Activated naive CD4-positive, alpha-beta T cell treated with anti-CD3 and anti-CD28 coated beads for 36 hours (primary cell): ENCODE measurements at regions of chr10 and their contacts with region 1.

Region 1: DNA sequence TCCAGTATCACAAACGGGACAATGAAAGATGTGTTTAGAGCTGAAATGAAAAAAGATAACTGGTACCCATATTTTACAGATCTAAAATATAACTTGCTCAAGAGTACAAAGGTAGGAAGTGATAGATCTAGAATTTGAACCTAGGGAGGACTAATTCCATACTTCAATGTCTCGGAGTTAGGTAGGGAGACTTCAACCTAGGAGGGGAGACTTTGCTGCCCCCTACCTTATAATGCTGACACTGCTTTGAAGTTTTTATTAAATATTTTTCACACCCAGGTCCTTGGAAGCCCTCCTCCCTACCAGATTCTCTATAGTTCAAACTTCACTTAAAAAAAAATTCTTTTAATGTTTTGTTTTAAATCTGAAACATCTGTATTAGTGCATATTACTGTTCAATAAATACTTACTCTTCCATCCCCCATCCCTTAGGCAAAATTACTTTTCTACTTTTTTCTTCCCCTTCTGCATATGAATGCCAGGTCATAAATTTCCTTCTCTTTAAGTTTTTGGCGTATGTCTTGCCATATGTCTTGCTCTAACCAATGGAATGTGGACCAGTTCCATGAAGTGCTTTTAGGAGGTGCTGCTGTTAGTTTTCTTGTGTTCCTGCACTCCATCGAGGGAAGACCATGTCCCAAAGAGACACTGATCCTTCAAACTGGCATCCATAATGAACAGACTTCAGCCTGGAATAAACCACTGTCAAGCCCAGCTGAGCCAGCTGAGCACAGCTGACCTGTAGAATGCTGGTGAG is 57.8 kb downstream of the MICU1 start:
- DNase-seq: no peak
- H3K4me3 Mint-ChIP-seq: no peak overlapping the region
- H3K27ac Mint-ChIP-seq: no peak overlapping the region
- H3K4me1 Mint-ChIP-seq: peaks cover 21% of the 10 kb centered on the region
- H3K27me3 Mint-ChIP-seq: no peaks in the 10 kb centered on the region

Region 2: DNA sequence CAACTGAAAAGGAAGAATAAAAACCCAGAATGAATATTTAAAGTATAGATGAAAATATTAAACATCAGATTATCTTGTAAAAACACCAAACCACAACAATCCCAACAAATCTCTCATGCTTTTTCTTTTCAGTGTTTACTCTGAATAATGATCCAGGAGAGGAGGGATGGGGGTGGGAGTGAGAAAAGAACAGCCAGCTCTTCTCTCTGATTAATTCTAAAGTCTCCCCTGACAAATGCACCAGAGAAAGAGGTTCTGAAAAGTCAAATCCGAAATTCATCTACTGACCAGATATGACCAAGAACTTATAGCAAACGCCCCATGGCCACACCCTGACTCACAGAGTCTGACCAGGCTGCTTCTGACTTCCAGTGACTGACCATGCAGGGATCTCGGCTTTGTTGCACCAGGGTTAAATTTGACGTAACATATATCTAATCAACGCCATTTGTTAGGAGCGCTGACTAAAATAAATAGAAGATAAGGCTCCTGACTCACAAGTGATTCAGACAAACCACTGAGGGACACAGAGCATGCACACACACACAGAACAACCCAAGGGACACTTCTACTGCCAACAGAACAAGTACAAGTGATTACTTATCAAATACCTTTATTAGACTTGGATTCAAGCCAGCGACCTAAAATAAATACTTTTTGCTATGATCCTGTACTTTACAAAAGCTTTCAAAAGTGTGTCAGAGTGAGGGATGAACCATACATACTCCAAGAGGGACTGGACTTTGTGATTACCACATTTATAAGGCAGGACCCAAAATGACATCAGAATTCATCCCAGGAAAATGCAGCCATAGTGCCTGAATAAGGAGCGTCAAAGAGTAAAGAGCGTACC is 470.4 kb before region 1 on chr10:
- CTCF ChIA-PET with region 1: no interaction called
- intact Hi-C with region 1: loop called (anchors 2 kb)
- DNase-seq: no peak
- H3K4me3 Mint-ChIP-seq: no peak overlapping the region
- H3K27ac Mint-ChIP-seq: no peak overlapping the region
- H3K4me1 Mint-ChIP-seq: peaks cover 68% of the 10 kb centered on the region
- H3K27me3 Mint-ChIP-seq: no peaks in the 10 kb centered on the region

Region 3: DNA sequence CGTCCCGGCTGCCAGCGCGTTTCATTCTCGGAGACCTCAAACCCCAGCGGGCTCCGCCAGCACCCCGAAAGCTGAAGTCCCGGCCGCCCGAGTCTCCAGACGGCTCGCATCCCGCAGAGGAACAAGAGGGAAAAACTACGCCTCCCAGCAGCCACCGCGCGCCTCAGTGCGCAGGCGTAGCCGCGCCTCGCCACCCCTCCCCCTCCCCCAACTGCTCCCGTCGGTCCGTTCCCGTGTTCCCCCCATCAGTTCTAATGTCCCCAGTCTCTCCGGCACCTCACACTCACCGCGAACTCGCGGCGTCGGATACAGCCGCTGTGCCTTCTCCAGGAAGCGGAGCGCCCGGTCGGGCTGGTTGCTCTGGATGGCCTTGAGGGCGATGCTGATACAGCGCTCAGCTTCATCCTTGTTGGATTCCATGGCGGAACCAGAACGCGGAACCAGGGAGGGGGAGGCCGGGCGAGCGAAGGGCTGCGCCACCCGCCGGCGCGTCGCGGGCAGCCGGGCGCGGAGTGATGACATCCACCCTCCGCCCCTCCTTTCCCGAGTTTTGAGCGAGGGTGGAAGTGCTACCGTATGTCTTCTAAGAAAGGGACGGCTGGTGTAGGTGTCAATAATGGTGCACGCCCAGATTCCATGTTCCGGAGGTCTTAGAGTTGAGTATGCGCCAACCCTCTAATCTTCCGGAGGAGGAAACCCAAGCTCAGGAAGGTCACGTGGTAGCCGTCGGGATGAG is 213.4 kb before region 1 on chr10 and contains the start of gene DNAJB12:
- CTCF ChIA-PET with region 1: no interaction called
- intact Hi-C with region 1: no loop called
- DNase-seq: peak; percentile 91
- H3K4me3 Mint-ChIP-seq: peak within 1 kb of the TSS; percentile 96
- H3K27ac Mint-ChIP-seq: peak within 1 kb of the TSS; percentile 97
- H3K4me1 Mint-ChIP-seq: peaks cover 34% of the 10 kb centered on the region
- H3K27me3 Mint-ChIP-seq: no peaks in the 10 kb centered on the region
- total RNA-seq, gene DNAJB12: 13.7 to 14.1 TPM

Region 4: GRCh38 chr10:72616716-72617115 is 48.7 kb after region 1 on chr10:
- CTCF ChIA-PET with region 1: no interaction called
- intact Hi-C with region 1: loop called (anchors 2 kb)
- DNase-seq: no peak
- H3K4me3 Mint-ChIP-seq: no peak overlapping the region
- H3K27ac Mint-ChIP-seq: peak overlapping the region; percentile 68
- H3K4me1 Mint-ChIP-seq: peaks cover 20% of the 10 kb centered on the region
- H3K27me3 Mint-ChIP-seq: no peaks in the 10 kb centered on the region

Region 5: GRCh38 chr10:72625608-72626443 is 57.8 kb after region 1 on chr10 and contains the start of gene MICU1:
- CTCF ChIA-PET with region 1: no interaction called
- intact Hi-C with region 1: loop called (anchors 1 kb)
- DNase-seq: peak; percentile 98
- H3K4me3 Mint-ChIP-seq: peak within 1 kb of the TSS; percentile 97
- H3K27ac Mint-ChIP-seq: peak within 1 kb of the TSS; percentile 73
- H3K4me1 Mint-ChIP-seq: peaks cover 16% of the 10 kb centered on the region
- H3K27me3 Mint-ChIP-seq: no peaks in the 10 kb centered on the region
- total RNA-seq, gene MICU1: 40.0 to 41.9 TPM

Region 6: GRCh38 chr10:72692057-72692910 is 124.2 kb after region 1 on chr10 and contains the start of gene MCU:
- CTCF ChIA-PET with region 1: interaction called, 3 read pairs
- intact Hi-C with region 1: loop called (anchors 1 kb)
- DNase-seq: peak; percentile 95
- H3K4me3 Mint-ChIP-seq: peak within 1 kb of the TSS; percentile 83
- H3K27ac Mint-ChIP-seq: no peak within 1 kb of the TSS
- H3K4me1 Mint-ChIP-seq: peaks cover 32% of the 10 kb centered on the region
- H3K27me3 Mint-ChIP-seq: no peaks in the 10 kb centered on the region
- total RNA-seq, gene MCU: 23.6 to 25.6 TPM

Region 7: DNA sequence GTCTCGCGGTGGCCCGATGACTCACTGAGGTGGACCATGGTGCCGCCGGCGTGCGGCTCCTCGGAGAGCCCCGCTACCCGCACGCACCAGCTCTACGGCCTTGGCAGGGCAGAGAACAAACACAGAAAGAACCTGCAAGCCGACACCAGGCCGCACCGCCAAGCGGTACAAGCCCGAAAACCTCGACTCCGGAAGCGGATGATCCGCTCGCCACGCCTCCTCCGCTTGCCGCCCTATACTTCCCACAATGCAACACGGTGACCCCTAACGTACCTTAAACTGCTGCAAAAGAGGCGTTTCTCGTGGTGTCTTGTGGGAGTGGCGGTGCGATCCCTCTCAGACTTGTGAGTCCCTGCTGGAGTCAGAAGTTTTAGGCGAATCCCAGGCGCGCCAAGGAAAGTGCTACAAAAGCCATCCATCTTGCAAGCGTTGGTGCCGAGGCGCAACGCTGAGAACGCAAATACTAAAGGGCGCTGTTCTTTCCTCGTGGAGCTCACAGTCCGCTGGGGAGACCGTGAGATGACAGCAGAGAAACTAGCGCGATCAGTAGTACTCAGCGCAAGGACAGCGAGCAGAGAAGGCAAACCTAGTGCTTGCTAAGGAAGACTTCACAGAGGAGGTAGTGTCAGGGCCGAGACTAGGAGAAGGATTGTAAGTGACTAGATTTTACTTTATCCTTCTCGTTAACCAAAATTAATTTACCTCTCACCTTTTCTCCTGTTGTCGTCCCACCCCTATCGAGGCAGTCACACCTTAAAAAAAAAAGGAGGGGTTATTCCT is 684.6 kb after region 1 on chr10 and contains the start of gene MRPS16:
- CTCF ChIA-PET with region 1: no interaction called
- intact Hi-C with region 1: loop called (anchors 5 kb)
- DNase-seq: peak; percentile 97
- H3K4me3 Mint-ChIP-seq: peak within 1 kb of the TSS; percentile 98
- H3K27ac Mint-ChIP-seq: peak within 1 kb of the TSS; percentile 94
- H3K4me1 Mint-ChIP-seq: peaks cover 38% of the 10 kb centered on the region
- H3K27me3 Mint-ChIP-seq: no peaks in the 10 kb centered on the region
- total RNA-seq, gene MRPS16: 140 to 145 TPM